Testis (tissue), 5 donors: ENCODE measurements at regions of chr10 and their contacts with region 1.

Region 1: GRCh38 chr10:120942806-120943413 is 91.7 kb downstream of the WDR11 start:
- DNase-seq: peak; percentile 91
- H3K4me3 ChIP-seq: peak overlapping the region in 1 of 2 donors; percentile 29
- H3K27ac ChIP-seq: no peak overlapping the region
- H3K4me1 ChIP-seq: peaks cover 4% of the 10 kb centered on the region
- H3K27me3 ChIP-seq: no peaks in the 10 kb centered on the region
- CTCF ChIP-seq: peak; percentile 77 to 85 (median 78)
- POLR2A ChIP-seq: no peak

Region 2: GRCh38 chr10:121002586-121003205 is 59.8 kb after region 1 on chr10:
- intact Hi-C with region 1: no loop called
- DNase-seq: no peak
- H3K4me3 ChIP-seq: no peak overlapping the region
- H3K27ac ChIP-seq: no peak overlapping the region
- H3K4me1 ChIP-seq: no peaks in the 10 kb centered on the region
- H3K27me3 ChIP-seq: no peaks in the 10 kb centered on the region
- CTCF ChIP-seq: no peak
- POLR2A ChIP-seq: no peak

Region 3: DNA sequence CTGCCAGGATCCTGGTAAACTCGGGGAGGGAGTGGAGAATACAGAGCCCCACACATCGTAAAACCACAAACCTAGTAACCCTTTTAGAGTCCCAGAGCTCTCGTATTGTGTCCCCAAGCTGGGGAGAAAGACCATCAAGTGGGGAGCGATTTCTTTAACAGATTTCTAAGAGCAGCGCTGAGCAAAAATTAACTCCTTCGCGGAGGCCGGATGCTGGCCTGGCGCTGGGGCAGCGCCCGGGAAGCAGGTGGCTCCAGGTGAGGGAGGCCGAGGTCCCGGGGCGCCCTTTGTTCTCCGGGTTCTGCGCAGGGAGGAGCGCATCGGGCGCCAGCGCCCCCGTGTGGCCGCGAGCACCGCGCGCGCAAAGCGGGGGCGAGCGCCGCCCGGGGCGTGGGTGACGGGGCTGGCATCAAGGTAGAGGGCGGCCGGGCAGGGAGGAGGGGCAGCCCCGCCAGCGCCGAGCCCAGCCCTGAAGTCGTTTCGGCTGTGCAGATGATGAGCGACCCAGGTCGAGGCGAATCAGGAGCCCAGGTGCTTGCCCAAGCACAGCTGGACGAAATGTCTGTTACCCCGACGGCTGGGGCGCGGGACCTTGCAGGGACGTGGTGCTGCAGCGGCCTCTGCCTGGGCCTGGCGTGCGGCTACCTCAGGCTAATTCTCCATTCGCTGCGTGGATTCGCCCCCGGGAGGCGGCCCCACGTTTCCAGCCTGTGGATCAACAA is 665.7 kb after region 1 on chr10:
- intact Hi-C with region 1: loop called (anchors 10 kb)
- DNase-seq: peak; percentile 58
- H3K4me3 ChIP-seq: peak overlapping the region; percentile 45 to 46
- H3K27ac ChIP-seq: no peak overlapping the region
- H3K4me1 ChIP-seq: peaks cover 2% of the 10 kb centered on the region
- H3K27me3 ChIP-seq: no peaks in the 10 kb centered on the region
- CTCF ChIP-seq: peak; percentile 79 to 98 (median 82)
- POLR2A ChIP-seq: no peak

Region 4: GRCh38 chr10:121722665-121723064 is 779.8 kb after region 1 on chr10:
- intact Hi-C with region 1: loop called (anchors 10 kb)
- DNase-seq: no peak
- H3K4me3 ChIP-seq: no peak overlapping the region
- H3K27ac ChIP-seq: no peak overlapping the region
- H3K4me1 ChIP-seq: no peaks in the 10 kb centered on the region
- H3K27me3 ChIP-seq: no peaks in the 10 kb centered on the region
- CTCF ChIP-seq: no peak
- POLR2A ChIP-seq: no peak

Region 5: GRCh38 chr10:121899727-121900126 is 956.8 kb after region 1 on chr10:
- intact Hi-C with region 1: loop called (anchors 10 kb)
- DNase-seq: no peak
- H3K4me3 ChIP-seq: no peak overlapping the region
- H3K27ac ChIP-seq: no peak overlapping the region
- H3K4me1 ChIP-seq: no peaks in the 10 kb centered on the region
- H3K27me3 ChIP-seq: no peaks in the 10 kb centered on the region
- CTCF ChIP-seq: no peak
- POLR2A ChIP-seq: no peak